ENCODE measurements at regions of chr4 and their contacts with region 1.

Region 1: GRCh38 chr4:184474263-184475095 is at the start of gene IRF2:
- DNase-seq: peak; percentile 88 to 99 (median 94)

Region 2: GRCh38 chr4:184255361-184255760 is 219.1 kb before region 1 on chr4:
- intact Hi-C with region 1: no loop called
- DNase-seq: peak in 9 of 10 donors; percentile 38 to 91 (median 52)

Region 3: DNA sequence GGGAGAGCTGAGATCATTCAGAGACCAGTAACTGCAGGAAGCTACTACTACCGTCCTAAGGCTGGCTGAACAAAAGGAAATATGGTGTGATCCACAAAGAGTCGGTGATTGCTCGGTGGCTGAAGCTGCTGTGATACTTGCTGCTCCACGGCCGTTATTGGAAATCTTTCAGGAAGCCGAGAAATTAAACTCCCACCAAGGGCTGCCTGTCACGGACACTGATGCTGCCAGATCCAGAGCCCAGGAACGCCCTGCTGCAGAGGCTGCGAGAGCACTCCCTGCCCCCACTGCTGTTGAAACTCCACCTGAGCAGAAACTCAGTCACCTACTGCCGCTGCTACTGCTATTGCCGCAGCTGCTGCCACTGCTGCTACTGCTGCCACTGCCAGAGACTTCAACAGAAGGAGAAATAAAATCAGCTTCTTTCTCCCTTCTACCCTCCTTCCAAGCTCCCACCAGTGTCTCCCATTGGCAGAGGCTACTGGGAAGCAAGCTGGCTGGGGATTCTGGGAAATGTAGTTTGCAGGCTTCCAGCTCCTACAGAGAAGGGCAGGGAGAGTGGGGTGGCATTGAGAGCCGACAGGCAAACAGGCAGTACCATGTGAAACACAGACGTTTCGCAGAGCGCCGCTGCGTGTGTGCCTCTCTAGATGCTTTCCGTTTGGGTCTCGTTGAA is 130.8 kb before region 1 on chr4:
- intact Hi-C with region 1: loop called (anchors 5 kb)
- DNase-seq: peak; percentile 60 to 96 (median 79)

Region 4: GRCh38 chr4:184408021-184408710 is 66.3 kb before region 1 on chr4:
- intact Hi-C with region 1: loop called (anchors 5 kb)
- DNase-seq: no peak

Region 5: DNA sequence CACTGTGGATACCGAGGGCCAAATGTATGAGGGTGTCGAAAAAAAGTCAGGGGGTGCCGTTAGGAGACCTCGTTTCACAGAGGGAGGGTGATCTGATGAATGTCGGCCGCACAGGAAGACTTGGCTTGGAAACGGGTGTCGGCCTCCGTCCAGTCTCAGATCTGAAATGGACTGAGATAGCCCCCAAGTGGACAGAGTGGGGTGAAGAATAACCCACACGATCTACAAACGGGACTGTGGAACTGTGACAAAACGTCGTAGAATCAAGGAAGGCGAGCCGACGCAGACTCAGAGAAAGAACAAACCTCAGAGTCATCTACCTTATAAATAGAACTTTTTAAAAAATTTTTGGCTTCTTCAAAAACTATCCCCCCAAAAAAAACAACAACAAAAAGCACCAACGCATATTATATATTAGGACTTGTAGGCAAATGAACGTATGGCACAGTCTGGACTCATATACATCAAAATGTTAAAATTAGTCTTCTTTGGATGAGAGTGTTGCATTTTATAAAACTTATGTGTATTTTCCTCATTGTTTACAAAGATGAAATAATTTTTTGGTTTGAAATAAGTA is 63.6 kb after region 1 on chr4:
- intact Hi-C with region 1: loop called (anchors 1 kb)
- DNase-seq: peak; percentile 74 to 96 (median 82)

Measured in posterior cingulate gyrus (tissue), 11 donors.